ENCODE measurements at regions of chr7 and their contacts with region 1.

Region 1: DNA sequence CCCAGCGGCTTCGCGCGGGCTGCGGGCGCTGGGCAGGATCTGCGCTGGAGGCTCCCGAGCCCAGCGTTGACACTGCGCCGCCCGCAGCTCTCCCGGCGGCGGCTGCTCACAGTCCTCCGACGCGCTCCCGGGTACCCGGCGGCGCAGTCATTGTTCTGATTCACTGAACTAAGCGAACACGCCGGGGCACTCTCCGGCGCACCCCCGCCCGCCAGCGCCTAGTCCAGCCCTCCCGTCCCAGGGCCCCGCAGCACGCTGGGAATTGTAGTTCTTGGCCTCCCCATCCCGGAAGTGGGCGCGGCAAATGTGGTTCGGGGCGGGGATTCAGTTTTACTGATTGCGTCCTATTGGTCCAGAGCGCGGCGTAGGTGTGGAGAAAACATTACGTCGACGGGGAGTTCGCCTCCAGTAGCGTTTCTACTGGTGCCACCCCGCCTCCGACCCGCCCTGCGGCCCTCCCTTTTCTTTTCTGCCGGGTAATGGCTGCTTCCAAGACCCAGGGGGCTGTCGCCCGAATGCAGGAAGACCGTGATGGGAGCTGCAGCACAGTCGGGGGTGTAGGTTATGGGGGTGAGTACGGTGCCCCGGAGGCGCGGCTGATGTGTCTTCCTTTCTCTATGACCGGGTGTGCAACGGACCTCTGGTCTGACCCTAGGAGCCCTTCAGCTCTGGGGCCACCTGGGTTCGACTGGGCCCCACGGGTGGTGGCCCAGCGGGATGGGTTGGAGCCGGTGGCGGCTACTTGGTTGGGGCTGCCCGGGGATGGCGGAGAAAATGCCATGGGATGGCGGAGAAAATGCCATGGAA is at the starts of genes DOCK4 and ZNF277:
- DNase-seq: peak; percentile 99
- H3K4me3 ChIP-seq: peak within 1 kb of the TSS; percentile 95
- H3K27ac ChIP-seq: no peak within 1 kb of the TSS
- H3K4me1 ChIP-seq: peaks cover 21% of the 10 kb centered on the region
- CTCF ChIP-seq: no peak
- total RNA-seq, gene DOCK4: 1.9 and 4.9 TPM in 2 replicates
- total RNA-seq, gene ZNF277: 16.9 and 18.1 TPM in 2 replicates

Region 2: GRCh38 chr7:111527545-111527944 is 678.9 kb before region 1 on chr7:
- CTCF ChIA-PET with region 1: no interaction called
- POLR2A ChIA-PET with region 1: no interaction called
- intact Hi-C with region 1: loop called (anchors 5 kb)
- DNase-seq: peak; percentile 68
- H3K4me3 ChIP-seq: peak overlapping the region; percentile 56
- H3K27ac ChIP-seq: peak overlapping the region; percentile 84
- H3K4me1 ChIP-seq: peaks cover 59% of the 10 kb centered on the region
- CTCF ChIP-seq: no peak

Region 3: GRCh38 chr7:112390167-112390566 is 183.7 kb after region 1 on chr7:
- CTCF ChIA-PET with region 1: no interaction called
- POLR2A ChIA-PET with region 1: no interaction called
- intact Hi-C with region 1: loop called (anchors 5 kb)
- DNase-seq: no peak
- H3K4me3 ChIP-seq: no peak overlapping the region
- H3K27ac ChIP-seq: no peak overlapping the region
- H3K4me1 ChIP-seq: peaks cover 11% of the 10 kb centered on the region
- CTCF ChIP-seq: no peak

Region 4: GRCh38 chr7:112422842-112423496 is 216.5 kb after region 1 on chr7:
- CTCF ChIA-PET with region 1: no interaction called
- POLR2A ChIA-PET with region 1: interaction called, 6 read pairs
- intact Hi-C with region 1: loop called (anchors 1 kb)
- DNase-seq: peak; percentile 57
- H3K4me3 ChIP-seq: peak overlapping the region; percentile 54
- H3K27ac ChIP-seq: peak overlapping the region; percentile 92
- H3K4me1 ChIP-seq: peaks cover 50% of the 10 kb centered on the region
- CTCF ChIP-seq: no peak

Measured in OCI-LY7 (cell line).